GM12878 (cell line): ENCODE measurements at regions of chr3 and their contacts with region 1.

Region 1: DNA sequence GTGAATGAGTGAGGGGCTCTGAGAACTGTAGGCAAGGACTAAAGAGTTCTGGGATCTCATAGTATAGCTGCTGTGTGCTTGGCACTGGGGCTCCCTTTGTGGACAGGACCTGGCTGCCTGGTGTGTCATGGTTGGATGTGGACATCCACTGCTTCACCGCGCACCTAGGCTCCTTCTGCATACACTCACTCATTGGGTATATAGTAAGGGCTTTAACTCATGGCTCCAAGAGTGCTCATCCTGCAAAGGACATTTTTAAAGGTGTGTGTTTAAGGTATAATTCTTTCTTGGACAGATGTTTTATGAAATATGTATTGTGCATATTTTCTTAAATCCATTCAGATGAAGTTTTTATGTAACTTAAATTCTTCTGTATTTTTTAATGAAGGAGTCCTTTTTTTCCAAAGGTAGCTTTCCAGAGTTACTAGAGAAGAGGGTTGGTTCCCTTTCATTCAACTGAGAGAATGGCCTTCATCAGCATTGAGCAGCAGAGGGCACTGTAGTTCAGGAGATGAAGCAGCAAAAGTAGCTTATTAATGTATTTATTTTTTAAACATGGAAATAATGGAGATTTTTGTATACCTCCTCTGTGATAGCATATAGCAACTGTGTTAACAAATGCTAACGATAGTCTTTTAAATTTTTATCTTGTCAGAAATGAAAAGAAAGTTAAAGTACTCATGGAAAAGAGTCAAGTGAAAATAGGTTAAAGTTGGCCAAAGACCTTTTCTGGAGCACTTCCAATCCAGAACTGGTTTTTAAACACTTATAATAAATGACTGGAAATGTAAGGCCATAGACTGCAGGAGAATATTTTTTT is 25.2 kb downstream of the OXNAD1 start:
- DNase-seq: no peak
- ATAC-seq: peak; percentile 58
- H3K4me3 ChIP-seq: no peak overlapping the region
- H3K27ac ChIP-seq: peak overlapping the region; percentile 5; the same call in 1 of the 2 replicates
- H3K4me1 ChIP-seq: peaks cover 11% of the 10 kb centered on the region
- H3K27me3 ChIP-seq: no peaks in the 10 kb centered on the region
- CTCF ChIP-seq: peak; percentile 64 to 89 (median 81)
- EP300 ChIP-seq: no peak
- POLR2A ChIP-seq: no peak
- RAD21 ChIP-seq: peak; percentile 96

Region 2: GRCh38 chr3:16090024-16090423 is 200.2 kb before region 1 on chr3:
- CTCF ChIA-PET with region 1: no interaction called
- POLR2A ChIA-PET with region 1: no interaction called
- RAD21 ChIA-PET with region 1: no interaction called
- SMC1A ChIA-PET with region 1: no interaction called
- in situ Hi-C with region 1: no loop called
- intact Hi-C with region 1: no loop called
- DNase-seq: no peak
- ATAC-seq: no peak
- H3K4me3 ChIP-seq: no peak overlapping the region
- H3K27ac ChIP-seq: no peak overlapping the region
- H3K4me1 ChIP-seq: no peaks in the 10 kb centered on the region
- H3K27me3 ChIP-seq: 0 out of 4 replicates have a peak, but pooled peaks cover 0 to 3% of the 10 kb centered on the region in 2 experiments
- CTCF ChIP-seq: no peak
- EP300 ChIP-seq: no peak
- POLR2A ChIP-seq: no peak
- RAD21 ChIP-seq: no peak

Region 3: GRCh38 chr3:16216373-16216940 is 73.8 kb before region 1 on chr3:
- CTCF ChIA-PET with region 1: no interaction called
- POLR2A ChIA-PET with region 1: no interaction called
- RAD21 ChIA-PET with region 1: no interaction called
- SMC1A ChIA-PET with region 1: no interaction called
- in situ Hi-C with region 1: no loop called
- intact Hi-C with region 1: no loop called
- DNase-seq: no peak
- ATAC-seq: no peak
- H3K4me3 ChIP-seq: no peak overlapping the region
- H3K27ac ChIP-seq: no peak overlapping the region
- H3K4me1 ChIP-seq: no peaks in the 10 kb centered on the region
- H3K27me3 ChIP-seq: no peaks in the 10 kb centered on the region; a peak in 1 of 4 replicates
- CTCF ChIP-seq: no peak
- EP300 ChIP-seq: no peak
- POLR2A ChIP-seq: no peak
- RAD21 ChIP-seq: no peak

Region 4: DNA sequence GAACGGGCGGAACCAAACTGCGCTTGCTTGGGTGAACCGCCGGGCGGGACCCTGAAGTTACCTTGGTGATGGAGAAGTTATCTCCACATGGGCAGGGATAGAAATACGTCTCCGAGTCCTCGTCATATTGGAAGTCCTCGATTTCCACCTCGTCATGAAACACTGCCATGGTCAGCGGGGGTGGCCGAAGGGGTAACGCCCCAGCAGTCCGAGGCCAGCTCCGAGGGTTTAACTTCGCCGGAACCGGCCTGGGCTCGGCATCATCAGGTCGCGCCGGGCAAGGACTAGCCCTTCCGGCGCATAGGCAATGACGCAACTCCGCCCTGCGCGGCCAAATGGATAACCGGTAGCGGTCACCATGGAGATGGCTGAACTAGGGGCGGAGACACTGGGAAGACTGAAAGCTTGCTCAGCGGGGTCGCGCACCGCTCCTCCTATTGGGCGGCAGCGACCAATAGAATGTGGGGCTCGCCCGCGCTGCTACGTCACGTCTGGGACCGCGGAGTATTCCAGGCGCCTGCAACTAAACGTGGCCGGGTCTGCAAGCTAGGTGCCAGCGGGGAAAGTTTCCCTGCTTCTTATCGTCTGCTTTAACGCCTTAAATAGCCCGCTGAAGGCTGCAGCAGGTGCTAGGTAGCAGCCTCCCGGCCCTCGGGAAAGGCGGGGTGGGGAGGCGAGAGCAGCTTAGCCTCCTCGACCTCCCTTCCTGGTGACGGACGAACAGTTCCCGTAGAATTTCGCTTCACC is 25.3 kb before region 1 on chr3 and contains the starts of genes DPH3 and OXNAD1:
- CTCF ChIA-PET with region 1: interaction called, 93 read pairs
- POLR2A ChIA-PET with region 1: interaction called, 7 read pairs
- RAD21 ChIA-PET with region 1: interaction called, 15 read pairs
- SMC1A ChIA-PET with region 1: interaction called, 63 read pairs
- in situ Hi-C with region 1: no loop called
- intact Hi-C with region 1: no loop called
- DNase-seq: peak; percentile 95
- ATAC-seq: peak; percentile 98
- H3K4me3 ChIP-seq: peak within 1 kb of the TSS; percentile 91
- H3K27ac ChIP-seq: peak within 1 kb of the TSS; percentile 86
- H3K4me1 ChIP-seq: peaks cover 3% of the 10 kb centered on the region
- H3K27me3 ChIP-seq: no peaks in the 10 kb centered on the region
- CTCF ChIP-seq: no peak
- EP300 ChIP-seq: no peak
- POLR2A ChIP-seq: peak; percentile 58
- RAD21 ChIP-seq: no peak
- polyA plus RNA-seq, gene DPH3: 67.1 to 71.8 TPM
- polyA plus RNA-seq, gene OXNAD1: 5.6 to 6.9 TPM

Region 5: GRCh38 chr3:16309558-16309957 is 19.3 kb after region 1 on chr3:
- CTCF ChIA-PET with region 1: interaction called, 45 read pairs
- POLR2A ChIA-PET with region 1: interaction called, 5 read pairs
- RAD21 ChIA-PET with region 1: interaction called, 13 read pairs
- SMC1A ChIA-PET with region 1: interaction called, 20 read pairs
- in situ Hi-C with region 1: no loop called
- intact Hi-C with region 1: no loop called
- DNase-seq: peak; percentile 77
- ATAC-seq: peak; percentile 93
- H3K4me3 ChIP-seq: no peak overlapping the region
- H3K27ac ChIP-seq: no peak overlapping the region; the same call in 1 of the 2 replicates
- H3K4me1 ChIP-seq: peaks cover 24% of the 10 kb centered on the region
- H3K27me3 ChIP-seq: no peaks in the 10 kb centered on the region
- CTCF ChIP-seq: no peak
- EP300 ChIP-seq: no peak
- POLR2A ChIP-seq: no peak
- RAD21 ChIP-seq: no peak

Region 6: DNA sequence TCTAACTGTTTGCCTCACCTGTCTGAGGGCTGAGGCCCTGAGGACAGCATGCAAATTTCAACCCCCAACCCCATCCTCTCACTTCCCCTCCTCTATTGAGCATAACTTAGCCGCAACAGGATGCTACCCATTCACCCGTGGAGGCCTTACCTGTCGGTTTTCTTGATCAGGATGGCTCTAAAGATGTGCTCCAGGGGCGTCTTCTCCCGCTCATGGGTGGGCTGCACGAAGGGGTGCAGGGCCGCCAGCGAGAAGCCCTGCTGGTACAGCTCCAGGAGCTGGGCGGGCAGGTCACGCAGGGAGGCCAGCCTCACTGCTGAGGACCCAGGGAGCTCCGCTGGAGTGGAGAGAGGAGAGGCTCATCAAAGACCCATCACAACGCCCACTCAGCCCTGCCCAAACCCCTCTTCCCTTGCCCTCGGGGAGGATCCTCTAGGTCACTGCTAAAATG is 143.5 kb after region 1 on chr3:
- CTCF ChIA-PET with region 1: interaction called, 15 read pairs
- POLR2A ChIA-PET with region 1: no interaction called
- RAD21 ChIA-PET with region 1: interaction called, 6 read pairs
- SMC1A ChIA-PET with region 1: interaction called, 5 read pairs
- in situ Hi-C with region 1: no loop called
- intact Hi-C with region 1: no loop called
- DNase-seq: peak; percentile 74
- ATAC-seq: peak; percentile 89
- H3K4me3 ChIP-seq: no peak overlapping the region; the same call in 1 of the 2 replicates
- H3K27ac ChIP-seq: peak overlapping the region; percentile 59
- H3K4me1 ChIP-seq: peaks cover 39% of the 10 kb centered on the region
- H3K27me3 ChIP-seq: no peaks in the 10 kb centered on the region
- CTCF ChIP-seq: no peak
- EP300 ChIP-seq: peak; percentile 80 to 95
- POLR2A ChIP-seq: no peak
- RAD21 ChIP-seq: no peak; the same call in 1 of the 2 replicates

Region 7: GRCh38 chr3:16529264-16529663 is 239.0 kb after region 1 on chr3:
- CTCF ChIA-PET with region 1: interaction called, 11 read pairs
- POLR2A ChIA-PET with region 1: no interaction called
- RAD21 ChIA-PET with region 1: interaction called, 12 read pairs
- SMC1A ChIA-PET with region 1: interaction called, 13 read pairs
- in situ Hi-C with region 1: no loop called
- intact Hi-C with region 1: no loop called
- DNase-seq: no peak
- ATAC-seq: peak; percentile 72
- H3K4me3 ChIP-seq: no peak overlapping the region
- H3K27ac ChIP-seq: no peak overlapping the region
- H3K4me1 ChIP-seq: no peaks in the 10 kb centered on the region
- H3K27me3 ChIP-seq: no peaks in the 10 kb centered on the region
- CTCF ChIP-seq: peak in 2 of 3 experiments; percentile 22 to 24; a peak in 3 of 6 replicates
- EP300 ChIP-seq: no peak
- POLR2A ChIP-seq: no peak
- RAD21 ChIP-seq: peak; percentile 49

Region 8: GRCh38 chr3:16600780-16601539 is 310.7 kb after region 1 on chr3:
- CTCF ChIA-PET with region 1: interaction called, 6 read pairs
- POLR2A ChIA-PET with region 1: no interaction called
- RAD21 ChIA-PET with region 1: interaction called, 9 read pairs
- SMC1A ChIA-PET with region 1: interaction called, 11 read pairs
- in situ Hi-C with region 1: no loop called
- intact Hi-C with region 1: no loop called
- DNase-seq: no peak
- ATAC-seq: peak; percentile 86
- H3K4me3 ChIP-seq: no peak overlapping the region
- H3K27ac ChIP-seq: no peak overlapping the region
- H3K4me1 ChIP-seq: peaks cover 7% of the 10 kb centered on the region
- H3K27me3 ChIP-seq: no peaks in the 10 kb centered on the region
- CTCF ChIP-seq: peak; percentile 56 to 81 (median 69)
- EP300 ChIP-seq: no peak
- POLR2A ChIP-seq: no peak
- RAD21 ChIP-seq: peak; percentile 96

Region 9: GRCh38 chr3:17032407-17033034 is 742.3 kb after region 1 on chr3:
- CTCF ChIA-PET with region 1: no interaction called
- POLR2A ChIA-PET with region 1: no interaction called
- RAD21 ChIA-PET with region 1: no interaction called
- SMC1A ChIA-PET with region 1: no interaction called
- in situ Hi-C with region 1: loop called (anchors 25 kb)
- intact Hi-C with region 1: no loop called
- DNase-seq: no peak
- ATAC-seq: peak; percentile 81
- H3K4me3 ChIP-seq: no peak overlapping the region
- H3K27ac ChIP-seq: no peak overlapping the region
- H3K4me1 ChIP-seq: peaks cover 15% of the 10 kb centered on the region
- H3K27me3 ChIP-seq: no peaks in the 10 kb centered on the region
- CTCF ChIP-seq: peak; percentile 54 to 64 (median 54); a peak in 5 of 6 replicates
- EP300 ChIP-seq: no peak
- POLR2A ChIP-seq: no peak
- RAD21 ChIP-seq: peak; percentile 76